Activated CD4-positive, alpha-beta T cell treated with anti-CD3 and anti-CD28 coated beads, Interleukin-2, amount 10 ng/mL, durations not matched to agents 24 days and 14 days (primary cell): ENCODE measurements at regions of chr20 and their contacts with region 1.

Region 1: DNA sequence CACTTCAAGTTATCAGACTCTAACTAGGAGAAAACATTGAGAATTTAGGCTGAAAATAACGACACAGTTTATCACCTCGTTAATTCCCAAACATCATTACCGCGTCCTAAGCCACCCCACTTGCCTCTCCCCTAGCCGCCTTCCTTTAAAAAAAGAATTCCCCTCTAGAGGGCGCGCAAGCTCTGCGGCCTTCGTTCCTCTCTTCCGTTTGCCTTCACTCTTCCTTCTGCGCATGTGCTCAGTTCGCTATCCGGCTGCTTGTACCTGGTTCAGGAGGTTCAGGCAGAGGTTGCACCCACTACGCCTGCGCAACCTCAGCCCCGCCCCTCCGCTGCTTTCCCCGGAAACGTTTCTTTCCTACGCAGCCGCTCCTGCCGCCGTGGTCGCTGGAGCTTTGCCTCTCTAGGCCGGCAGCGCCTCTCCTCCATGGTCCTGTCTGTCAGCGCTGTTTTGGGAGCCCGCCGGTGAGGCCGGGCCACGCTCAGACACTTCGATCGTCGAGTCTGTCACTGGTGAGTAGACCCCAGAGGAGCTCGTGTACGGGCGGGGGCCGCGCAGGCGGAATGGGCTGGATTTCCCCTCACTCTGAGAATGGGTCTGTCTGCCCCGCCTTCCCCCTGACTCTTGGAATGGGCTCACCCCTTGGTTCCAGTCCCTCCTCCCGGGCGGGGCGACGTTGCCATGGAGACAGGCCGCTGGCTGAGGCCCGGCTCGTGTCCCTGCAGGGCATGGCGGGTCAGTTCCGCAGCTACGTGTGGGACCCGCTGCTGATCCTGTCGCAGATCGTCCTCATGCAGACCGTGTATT is at the start of gene SYS1:
- DNase-seq: peak; percentile 100
- H3K4me3 Mint-ChIP-seq: peak within 1 kb of the TSS; percentile 100
- H3K27ac Mint-ChIP-seq: peak within 1 kb of the TSS; percentile 100
- H3K4me1 Mint-ChIP-seq: peaks cover 41% of the 10 kb centered on the region
- H3K27me3 Mint-ChIP-seq: no peaks in the 10 kb centered on the region
- total RNA-seq, gene SYS1: 24.4 and 26.2 TPM in 2 replicates

Region 2: GRCh38 chr20:45347936-45348778 is 14.8 kb before region 1 on chr20 and contains the start of gene SDC4:
- intact Hi-C with region 1: loop called (anchors 1 kb)
- DNase-seq: peak; percentile 91
- H3K4me3 Mint-ChIP-seq: peak within 1 kb of the TSS; percentile 92
- H3K27ac Mint-ChIP-seq: peak within 1 kb of the TSS; percentile 88
- H3K4me1 Mint-ChIP-seq: peaks cover 55% of the 10 kb centered on the region
- H3K27me3 Mint-ChIP-seq: no peaks in the 10 kb centered on the region
- total RNA-seq, gene SDC4: 177 and 185 TPM in 2 replicates

Region 3: DNA sequence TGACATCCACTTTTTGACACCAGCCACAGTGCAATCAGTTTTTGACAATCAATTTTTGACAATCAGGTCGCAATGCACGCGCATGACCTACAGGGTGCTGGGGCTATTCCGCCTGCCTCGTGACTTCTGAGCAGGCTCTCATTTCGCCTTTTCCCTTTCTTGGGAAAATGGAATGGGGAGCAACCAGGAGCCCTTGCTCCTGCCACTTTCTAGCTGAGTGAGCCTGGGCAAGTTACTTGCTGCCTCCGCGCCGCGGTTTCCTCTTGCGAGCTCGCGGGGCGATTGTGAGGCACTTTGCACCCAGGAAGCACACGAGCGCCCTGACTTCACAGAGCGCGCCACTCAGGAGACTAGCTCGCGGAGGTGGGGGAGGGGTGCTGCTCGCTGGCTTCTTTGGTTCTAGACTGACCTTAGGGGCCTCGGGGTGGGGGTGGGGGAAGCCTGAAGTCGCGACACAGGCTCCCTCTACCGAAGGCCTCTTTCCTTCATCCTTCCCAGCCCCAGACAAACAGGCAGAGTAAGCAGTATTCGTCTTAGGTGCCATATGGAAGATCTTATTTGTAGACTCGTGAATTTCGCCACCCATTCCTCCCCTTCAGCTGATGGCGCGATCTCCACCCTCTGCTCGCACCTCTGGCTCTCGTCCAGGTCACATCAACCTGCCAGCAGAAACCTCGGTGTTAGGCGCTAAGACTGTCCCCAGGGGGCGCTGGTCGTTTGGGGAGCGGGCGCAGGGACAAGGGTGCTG is 10.5 kb after region 1 on chr20:
- intact Hi-C with region 1: loop called (anchors 1 kb)
- DNase-seq: peak; percentile 96
- H3K4me3 Mint-ChIP-seq: peak overlapping the region; percentile 77
- H3K27ac Mint-ChIP-seq: peak overlapping the region; percentile 84
- H3K4me1 Mint-ChIP-seq: peaks cover 25% of the 10 kb centered on the region
- H3K27me3 Mint-ChIP-seq: no peaks in the 10 kb centered on the region

Region 4: GRCh38 chr20:45415774-45416637 is 53.0 kb after region 1 on chr20 and contains the start of gene PIGT:
- intact Hi-C with region 1: loop called (anchors 1 kb)
- DNase-seq: peak; percentile 97
- H3K4me3 Mint-ChIP-seq: peak within 1 kb of the TSS; percentile 93
- H3K27ac Mint-ChIP-seq: peak within 1 kb of the TSS; percentile 94
- H3K4me1 Mint-ChIP-seq: peaks cover 29% of the 10 kb centered on the region
- H3K27me3 Mint-ChIP-seq: no peaks in the 10 kb centered on the region
- total RNA-seq, gene PIGT: 84.7 and 86.6 TPM in 2 replicates

Region 5: GRCh38 chr20:45436732-45437391 is 73.9 kb after region 1 on chr20:
- intact Hi-C with region 1: loop called (anchors 1 kb)
- DNase-seq: peak; percentile 96
- H3K4me3 Mint-ChIP-seq: peak overlapping the region; percentile 84
- H3K27ac Mint-ChIP-seq: no peak overlapping the region
- H3K4me1 Mint-ChIP-seq: peaks cover 17% of the 10 kb centered on the region
- H3K27me3 Mint-ChIP-seq: peaks cover 2% of the 10 kb centered on the region

Region 6: GRCh38 chr20:45771182-45771759 is 408.3 kb after region 1 on chr20:
- intact Hi-C with region 1: loop called (anchors 5 kb)
- DNase-seq: peak; percentile 94
- H3K4me3 Mint-ChIP-seq: no peak overlapping the region
- H3K27ac Mint-ChIP-seq: no peak overlapping the region
- H3K4me1 Mint-ChIP-seq: peaks cover 8% of the 10 kb centered on the region
- H3K27me3 Mint-ChIP-seq: peaks cover 12% of the 10 kb centered on the region

Region 7: DNA sequence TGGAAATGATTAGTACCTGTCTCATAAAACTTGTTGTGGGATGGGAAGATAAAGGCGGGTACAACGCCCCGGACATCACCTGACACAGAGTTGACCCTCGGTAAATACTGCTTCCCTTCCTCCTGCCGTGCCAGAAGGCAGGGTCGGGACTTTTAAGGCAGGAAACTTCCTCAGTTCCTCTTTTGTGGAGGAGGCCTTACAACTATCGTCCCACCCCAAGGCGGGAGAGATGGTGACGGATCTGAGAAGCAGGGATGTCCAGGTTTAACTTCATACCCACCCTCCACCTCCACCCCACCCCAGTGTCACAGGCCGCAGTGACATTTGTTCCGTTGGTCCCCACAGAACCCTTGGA is 429.3 kb after region 1 on chr20:
- intact Hi-C with region 1: loop called (anchors 5 kb)
- DNase-seq: no peak
- H3K4me3 Mint-ChIP-seq: peak overlapping the region; percentile 82
- H3K27ac Mint-ChIP-seq: peak overlapping the region; percentile 84
- H3K4me1 Mint-ChIP-seq: peaks cover 19% of the 10 kb centered on the region
- H3K27me3 Mint-ChIP-seq: no peaks in the 10 kb centered on the region